Activated CD4-positive, alpha-beta memory T cell treated with anti-CD3 and anti-CD28 coated beads for 36 hours (primary cell): ENCODE measurements at regions of chr21 and their contacts with region 1.

Region 1: GRCh38 chr21:31180256-31181081 is 142.2 kb upstream of the KRTAP19-8 start:
- DNase-seq: no peak
- H3K4me3 Mint-ChIP-seq: peak overlapping the region; percentile 74
- H3K27ac Mint-ChIP-seq: peak overlapping the region; percentile 100
- H3K4me1 Mint-ChIP-seq: peaks cover 74% of the 10 kb centered on the region
- H3K27me3 Mint-ChIP-seq: no peaks in the 10 kb centered on the region

Region 2: DNA sequence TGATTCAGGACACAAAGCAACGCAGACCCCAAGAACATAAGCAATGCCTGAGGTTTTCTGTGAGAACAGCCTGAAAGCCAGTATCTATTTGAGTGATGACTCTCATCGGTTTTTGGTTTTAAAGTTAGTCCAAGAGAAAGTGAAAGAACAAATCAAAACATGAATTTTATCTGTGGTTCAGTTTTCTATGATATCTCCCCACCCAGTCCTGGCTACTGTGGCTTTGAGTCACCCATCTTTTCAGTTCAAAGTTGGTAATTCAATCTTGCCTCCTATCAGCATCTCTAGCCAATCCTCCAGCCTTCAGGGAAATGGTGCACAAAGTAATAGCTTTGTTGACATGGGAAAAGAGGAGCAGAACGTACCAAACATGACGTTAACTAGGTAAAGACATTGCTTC is 101.7 kb before region 1 on chr21:
- CTCF ChIA-PET with region 1: no interaction called
- POLR2A ChIA-PET with region 1: no interaction called
- intact Hi-C with region 1: no loop called
- DNase-seq: peak; percentile 24
- H3K4me3 Mint-ChIP-seq: no peak overlapping the region
- H3K27ac Mint-ChIP-seq: no peak overlapping the region
- H3K4me1 Mint-ChIP-seq: peaks cover 11% of the 10 kb centered on the region
- H3K27me3 Mint-ChIP-seq: peaks cover 1% of the 10 kb centered on the region

Region 3: DNA sequence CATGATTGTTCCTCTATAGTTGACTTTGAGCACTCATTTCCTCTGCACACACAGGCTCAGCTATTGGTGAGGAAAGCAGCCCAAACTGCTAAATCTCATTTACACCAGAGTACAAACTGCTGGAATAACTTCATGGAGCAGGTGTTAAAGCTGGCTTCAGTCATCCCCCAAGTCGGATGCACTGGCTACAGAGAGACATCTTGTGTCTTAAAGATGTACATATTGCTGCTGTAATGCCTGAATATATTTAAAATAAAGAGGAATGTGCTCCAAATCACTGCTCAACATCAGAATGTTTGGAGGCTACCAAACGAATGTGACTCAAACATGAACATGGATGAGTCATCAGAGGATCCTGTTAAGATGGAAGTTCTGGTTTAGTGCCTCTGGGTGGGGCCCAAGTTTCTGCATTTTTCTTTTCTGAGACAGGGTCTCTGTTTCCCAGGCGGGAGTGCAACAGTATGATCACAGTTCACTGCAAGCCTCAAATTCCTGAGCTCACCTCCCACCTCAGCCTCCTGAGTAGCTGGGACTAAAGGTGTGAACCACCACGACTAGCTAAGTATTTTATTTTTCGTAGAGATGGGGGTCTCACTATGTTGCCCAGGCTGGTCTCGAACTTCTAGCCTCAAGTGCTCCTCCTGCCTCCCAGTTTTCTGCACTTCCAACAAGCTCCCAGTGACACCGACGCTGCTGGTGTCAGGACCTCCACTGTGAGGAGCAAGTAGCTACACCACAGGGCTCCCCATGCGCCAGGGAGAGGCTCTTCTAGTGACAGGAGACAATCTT is 63.1 kb before region 1 on chr21:
- CTCF ChIA-PET with region 1: interaction called, 13 read pairs
- POLR2A ChIA-PET with region 1: no interaction called
- intact Hi-C with region 1: no loop called
- DNase-seq: peak; percentile 34
- H3K4me3 Mint-ChIP-seq: no peak overlapping the region
- H3K27ac Mint-ChIP-seq: peak overlapping the region; percentile 50
- H3K4me1 Mint-ChIP-seq: peaks cover 17% of the 10 kb centered on the region
- H3K27me3 Mint-ChIP-seq: no peaks in the 10 kb centered on the region

Region 4: DNA sequence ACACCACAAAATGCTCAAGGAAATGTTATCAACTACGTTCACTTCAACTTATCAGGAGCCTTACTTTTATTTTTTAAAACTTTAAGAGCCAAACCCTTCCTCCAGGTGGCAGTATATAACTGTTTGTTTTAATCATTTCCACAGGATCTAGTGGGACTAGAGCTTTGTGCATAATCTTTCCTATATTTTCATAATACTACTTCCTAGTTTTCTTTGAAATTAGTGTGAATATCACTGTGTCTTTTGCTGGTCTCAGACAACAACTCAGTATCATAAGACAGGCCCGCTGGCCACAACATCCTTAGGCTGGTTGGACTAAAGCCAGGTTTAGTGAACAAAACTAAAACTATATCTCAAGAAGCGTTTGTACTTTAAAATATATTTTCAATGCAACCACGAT is 18.1 kb after region 1 on chr21:
- CTCF ChIA-PET with region 1: interaction called, 50 read pairs
- POLR2A ChIA-PET with region 1: interaction called, 53 read pairs
- intact Hi-C with region 1: loop called (anchors 1 kb)
- DNase-seq: no peak
- H3K4me3 Mint-ChIP-seq: no peak overlapping the region
- H3K27ac Mint-ChIP-seq: no peak overlapping the region
- H3K4me1 Mint-ChIP-seq: peaks cover 44% of the 10 kb centered on the region
- H3K27me3 Mint-ChIP-seq: no peaks in the 10 kb centered on the region

Region 5: DNA sequence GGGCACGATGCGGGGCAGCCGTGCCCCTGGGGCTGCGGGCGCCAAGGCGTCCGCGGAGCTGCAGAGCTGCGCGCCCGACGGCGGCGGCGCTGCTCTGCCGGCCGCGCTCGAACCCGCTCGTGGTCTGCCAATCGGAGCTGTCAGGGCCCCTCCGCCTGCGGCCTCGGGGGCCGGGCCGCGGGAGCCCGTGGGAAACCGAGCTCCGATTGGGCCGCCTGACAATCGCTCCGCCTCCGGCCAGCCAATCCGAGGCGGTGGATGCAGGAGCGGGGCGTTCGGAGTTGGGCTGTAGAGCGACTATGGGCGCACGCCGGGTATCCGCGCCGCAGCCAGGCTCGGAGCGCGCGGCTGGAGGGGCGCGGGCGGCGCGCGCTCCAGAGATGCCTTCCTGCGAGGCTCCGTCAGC is 378.5 kb after region 1 on chr21:
- CTCF ChIA-PET with region 1: interaction called, 5 read pairs
- POLR2A ChIA-PET with region 1: interaction called, 3 read pairs
- intact Hi-C with region 1: loop called (anchors 5 kb)
- DNase-seq: peak; percentile 95
- H3K4me3 Mint-ChIP-seq: peak overlapping the region; percentile 85
- H3K27ac Mint-ChIP-seq: no peak overlapping the region
- H3K4me1 Mint-ChIP-seq: peaks cover 30% of the 10 kb centered on the region
- H3K27me3 Mint-ChIP-seq: peaks cover 22% of the 10 kb centered on the region

Region 6: DNA sequence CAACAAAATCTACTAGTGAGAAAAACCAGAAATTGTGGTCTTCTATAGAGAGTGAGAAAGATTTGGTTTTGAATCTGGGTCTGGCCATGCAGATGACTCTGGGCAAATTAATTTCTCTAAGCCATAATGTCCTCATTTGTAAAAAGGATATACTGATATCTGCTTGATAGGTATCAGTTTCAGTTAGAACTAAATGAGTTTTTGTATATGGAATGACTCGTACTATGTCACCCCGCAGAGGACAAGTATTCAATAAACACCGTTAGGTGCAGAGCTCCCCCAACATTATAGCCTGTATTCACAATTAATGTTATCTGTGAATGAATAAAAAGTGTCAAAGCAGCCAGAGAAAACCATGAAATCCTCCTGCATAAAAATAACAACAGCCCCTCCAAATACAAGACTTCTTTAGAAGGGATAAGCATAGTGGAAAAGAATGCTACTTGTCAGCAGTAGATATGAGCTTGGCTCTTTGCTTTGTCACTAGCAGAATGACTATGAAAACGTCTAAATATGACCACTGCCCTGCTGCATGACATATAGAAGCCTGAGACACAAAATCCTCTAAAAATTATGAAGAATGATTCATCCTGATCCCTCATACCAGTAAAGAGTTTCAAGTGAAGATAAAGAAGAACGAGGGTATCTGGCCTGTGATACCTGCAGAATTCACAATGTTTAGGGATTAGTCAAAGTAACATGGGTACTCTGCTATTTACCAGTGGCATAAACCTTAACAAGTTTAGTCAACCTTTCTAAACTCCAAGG is 533.7 kb after region 1 on chr21:
- CTCF ChIA-PET with region 1: no interaction called
- POLR2A ChIA-PET with region 1: no interaction called
- intact Hi-C with region 1: loop called (anchors 5 kb)
- DNase-seq: no peak
- H3K4me3 Mint-ChIP-seq: no peak overlapping the region
- H3K27ac Mint-ChIP-seq: peak overlapping the region; percentile 71
- H3K4me1 Mint-ChIP-seq: peaks cover 84% of the 10 kb centered on the region
- H3K27me3 Mint-ChIP-seq: no peaks in the 10 kb centered on the region